ENCODE measurements at regions of chr10 and their contacts with region 1.

Region 1: DNA sequence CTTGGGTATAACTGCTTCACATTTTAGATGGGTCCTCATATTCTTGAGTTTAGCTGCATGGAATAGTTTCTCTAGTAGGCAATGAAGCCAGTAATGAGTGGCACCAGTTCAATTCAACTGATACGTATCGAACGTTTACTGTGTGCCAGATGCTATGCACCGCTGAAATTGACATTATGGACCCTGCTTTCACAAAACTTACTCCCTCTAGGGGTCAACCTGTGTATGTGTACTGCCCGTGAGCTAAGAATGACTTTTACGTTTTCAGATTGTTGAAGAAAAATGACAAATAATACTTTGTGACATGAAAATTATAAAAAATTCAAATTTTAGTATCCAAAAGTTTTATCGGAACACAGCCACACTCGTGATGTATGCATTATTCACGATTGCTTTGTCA is 95.5 kb downstream of the ZMYND11 start:
- DNase-seq: no peak
- ATAC-seq: no peak
- H3K4me3 Mint-ChIP-seq: no peak overlapping the region
- H3K27ac Mint-ChIP-seq: no peak overlapping the region
- H3K4me1 Mint-ChIP-seq: peaks cover 8% of the 10 kb centered on the region
- H3K27me3 Mint-ChIP-seq: no peaks in the 10 kb centered on the region

Region 2: GRCh38 chr10:219731-220472 is 10.8 kb before region 1 on chr10:
- CTCF ChIA-PET with region 1: interaction called, 16 read pairs
- POLR2A ChIA-PET with region 1: no interaction called
- DNase-seq: no peak
- ATAC-seq: no peak
- H3K4me3 Mint-ChIP-seq: no peak overlapping the region
- H3K27ac Mint-ChIP-seq: no peak overlapping the region
- H3K4me1 Mint-ChIP-seq: peaks cover 20% of the 10 kb centered on the region
- H3K27me3 Mint-ChIP-seq: no peaks in the 10 kb centered on the region

Region 3: DNA sequence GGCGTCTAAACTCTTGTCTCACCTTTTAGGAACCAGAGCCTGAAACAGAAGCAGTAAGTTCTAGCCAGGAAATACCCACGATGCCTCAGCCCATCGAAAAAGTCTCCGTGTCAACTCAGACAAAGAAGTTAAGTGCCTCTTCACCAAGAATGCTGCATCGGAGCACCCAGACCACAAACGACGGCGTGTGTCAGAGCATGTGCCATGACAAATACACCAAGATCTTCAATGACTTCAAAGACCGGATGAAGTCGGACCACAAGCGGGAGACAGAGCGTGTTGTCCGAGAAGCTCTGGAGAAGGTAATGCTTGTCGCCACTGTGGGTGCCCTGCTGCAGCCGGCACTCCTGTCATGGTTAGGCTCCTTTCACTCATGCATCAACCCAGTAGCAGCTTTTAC is 17.6 kb after region 1 on chr10:
- CTCF ChIA-PET with region 1: interaction called, 10 read pairs
- POLR2A ChIA-PET with region 1: no interaction called
- DNase-seq: no peak
- ATAC-seq: no peak
- H3K4me3 Mint-ChIP-seq: no peak overlapping the region
- H3K27ac Mint-ChIP-seq: no peak overlapping the region
- H3K4me1 Mint-ChIP-seq: no peaks in the 10 kb centered on the region
- H3K27me3 Mint-ChIP-seq: no peaks in the 10 kb centered on the region

Region 4: DNA sequence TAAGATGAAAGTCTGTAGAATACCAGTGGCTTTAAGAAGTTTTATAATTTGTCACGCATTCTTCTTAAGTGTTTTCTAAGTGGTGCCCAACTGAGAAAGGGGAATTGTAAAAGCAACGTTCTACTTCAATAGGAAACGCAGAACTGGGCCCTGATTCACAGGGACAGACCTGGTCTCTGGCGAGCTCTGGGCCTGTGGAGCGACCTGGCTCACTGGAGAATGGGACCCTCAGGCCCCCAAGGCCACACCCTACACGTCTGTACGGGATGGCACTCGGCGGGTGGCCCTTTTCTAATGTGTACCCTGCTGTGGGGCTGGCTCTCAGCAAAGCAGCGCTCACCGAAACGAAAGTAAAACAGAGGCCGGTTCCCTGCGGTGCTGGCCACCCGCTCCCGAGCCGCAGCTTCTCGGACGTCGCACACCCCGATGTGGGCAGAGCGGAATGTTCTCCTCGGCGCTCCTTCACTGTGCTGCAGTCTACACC is 253.7 kb after region 1 on chr10:
- CTCF ChIA-PET with region 1: no interaction called
- POLR2A ChIA-PET with region 1: no interaction called
- DNase-seq: peak; percentile 37
- ATAC-seq: peak; percentile 69
- H3K4me3 Mint-ChIP-seq: peak overlapping the region; percentile 71
- H3K27ac Mint-ChIP-seq: peak overlapping the region; percentile 85
- H3K4me1 Mint-ChIP-seq: no peaks in the 10 kb centered on the region
- H3K27me3 Mint-ChIP-seq: no peaks in the 10 kb centered on the region

Measured in activated CD8-positive, alpha-beta T cell treated with anti-CD3 and anti-CD28 coated beads, Interleukin-2, amount 10 ng/mL, durations not matched to agents 7 days and 5 days (primary cell).